Posterior cingulate gyrus (tissue), 11 donors: ENCODE measurements at regions of chr15 and their contacts with region 1.

Region 1: GRCh38 chr15:65028921-65029735 is at the start of gene MTFMT:
- DNase-seq: peak; percentile 87 to 98 (median 92)

Region 2: GRCh38 chr15:64989416-64990167 is 39.5 kb before region 1 on chr15 and contains the start of gene SPG21:
- intact Hi-C with region 1: loop called (anchors 5 kb)
- DNase-seq: peak; percentile 85 to 99 (median 90)

Region 3: GRCh38 chr15:65069179-65069578 is 40.1 kb after region 1 on chr15:
- intact Hi-C with region 1: no loop called
- DNase-seq: no peak